Activated T-helper 1 cell treated with anti-CD3 and anti-CD28 coated beads, Interleukin-12 subunit alpha, Interleukin-12 subunit beta, Interleukin-2, Interleukin-4 antibody, amounts not matched to agents 30 ng/mL and 10 ng/mL and 1 ng/mL, durations not matched to agents 14 hours and 24 hours and 36 hours (primary cell): ENCODE measurements at regions of chr2 and their contacts with region 1.

Region 1: GRCh38 chr2:101308432-101309210 is at the start of gene RNF149:
- DNase-seq: peak; percentile 91
- H3K4me3 Mint-ChIP-seq: peak within 1 kb of the TSS; percentile 92
- H3K27ac Mint-ChIP-seq: peak within 1 kb of the TSS; percentile 96
- H3K4me1 Mint-ChIP-seq: peaks cover 65% of the 10 kb centered on the region
- H3K27me3 Mint-ChIP-seq: peaks cover 2% of the 10 kb centered on the region
- total RNA-seq, gene RNF149: 54.8 and 55.9 TPM in 2 replicates

Region 2: GRCh38 chr2:100562732-100563720 is 745.6 kb before region 1 on chr2 and contains the start of gene PDCL3:
- intact Hi-C with region 1: loop called (anchors 2 kb)
- DNase-seq: peak; percentile 93
- H3K4me3 Mint-ChIP-seq: peak within 1 kb of the TSS; percentile 97
- H3K27ac Mint-ChIP-seq: peak within 1 kb of the TSS; percentile 99
- H3K4me1 Mint-ChIP-seq: peaks cover 52% of the 10 kb centered on the region
- H3K27me3 Mint-ChIP-seq: no peaks in the 10 kb centered on the region
- total RNA-seq, gene PDCL3: 39.2 and 45.5 TPM in 2 replicates

Region 3: DNA sequence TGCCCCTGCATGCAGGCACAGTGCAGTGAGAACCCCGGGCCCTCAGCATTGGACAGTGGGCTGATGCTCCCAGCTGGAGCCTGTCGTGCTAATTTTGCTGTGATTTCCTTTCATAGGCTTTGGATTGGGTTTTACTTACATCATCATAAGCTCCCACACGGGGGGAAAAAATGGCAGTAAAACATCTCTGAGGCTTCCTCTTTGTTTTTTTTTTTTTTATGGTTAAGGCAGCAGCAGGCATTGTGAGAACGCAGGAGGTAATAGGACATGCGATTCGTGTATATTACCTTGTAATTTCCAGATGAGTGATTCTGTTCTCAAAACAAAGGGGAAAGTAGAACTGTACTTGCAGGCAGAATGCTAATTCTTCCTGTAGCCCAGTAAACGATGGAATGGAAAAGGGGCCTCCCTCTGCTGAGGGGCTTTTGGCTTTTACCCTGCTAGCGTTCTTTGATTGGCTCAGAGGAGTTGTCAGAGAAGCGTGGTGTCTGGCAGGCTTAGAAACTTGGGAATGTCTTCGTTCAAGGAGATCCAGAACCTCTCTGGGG is 399.0 kb before region 1 on chr2:
- intact Hi-C with region 1: no loop called
- DNase-seq: no peak
- H3K4me3 Mint-ChIP-seq: no peak overlapping the region
- H3K27ac Mint-ChIP-seq: no peak overlapping the region
- H3K4me1 Mint-ChIP-seq: no peaks in the 10 kb centered on the region
- H3K27me3 Mint-ChIP-seq: no peaks in the 10 kb centered on the region

Region 4: GRCh38 chr2:101151141-101151858 is 157.3 kb before region 1 on chr2 and contains the start of gene TBC1D8:
- intact Hi-C with region 1: loop called (anchors 5 kb)
- DNase-seq: peak; percentile 63
- H3K4me3 Mint-ChIP-seq: peak within 1 kb of the TSS; percentile 75
- H3K27ac Mint-ChIP-seq: no peak within 1 kb of the TSS
- H3K4me1 Mint-ChIP-seq: peaks cover 11% of the 10 kb centered on the region
- H3K27me3 Mint-ChIP-seq: peaks cover 60% of the 10 kb centered on the region
- total RNA-seq, gene TBC1D8: 0.91 and 1.1 TPM in 2 replicates

Region 5: DNA sequence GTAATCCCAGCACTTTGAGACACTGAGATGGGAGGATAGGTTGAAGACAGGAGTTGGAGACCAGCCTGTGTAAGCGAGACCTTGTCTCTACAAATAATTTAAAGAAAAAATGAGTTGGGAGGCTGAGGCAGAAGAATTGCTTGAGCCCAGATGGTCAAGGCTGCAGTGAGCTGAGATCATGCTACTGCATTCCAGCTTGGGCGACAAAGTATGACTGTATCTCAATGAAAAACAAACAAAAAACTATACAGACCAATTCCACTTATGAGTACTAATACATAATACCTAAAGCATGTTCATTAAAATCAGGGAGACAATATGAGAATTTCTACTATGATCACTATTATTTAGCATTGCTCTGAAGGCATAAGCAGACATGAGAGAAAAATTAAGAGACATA is 12.7 kb before region 1 on chr2:
- intact Hi-C with region 1: loop called (anchors 1 kb)
- DNase-seq: no peak
- H3K4me3 Mint-ChIP-seq: no peak overlapping the region
- H3K27ac Mint-ChIP-seq: no peak overlapping the region
- H3K4me1 Mint-ChIP-seq: peaks cover 33% of the 10 kb centered on the region
- H3K27me3 Mint-ChIP-seq: no peaks in the 10 kb centered on the region

Region 6: DNA sequence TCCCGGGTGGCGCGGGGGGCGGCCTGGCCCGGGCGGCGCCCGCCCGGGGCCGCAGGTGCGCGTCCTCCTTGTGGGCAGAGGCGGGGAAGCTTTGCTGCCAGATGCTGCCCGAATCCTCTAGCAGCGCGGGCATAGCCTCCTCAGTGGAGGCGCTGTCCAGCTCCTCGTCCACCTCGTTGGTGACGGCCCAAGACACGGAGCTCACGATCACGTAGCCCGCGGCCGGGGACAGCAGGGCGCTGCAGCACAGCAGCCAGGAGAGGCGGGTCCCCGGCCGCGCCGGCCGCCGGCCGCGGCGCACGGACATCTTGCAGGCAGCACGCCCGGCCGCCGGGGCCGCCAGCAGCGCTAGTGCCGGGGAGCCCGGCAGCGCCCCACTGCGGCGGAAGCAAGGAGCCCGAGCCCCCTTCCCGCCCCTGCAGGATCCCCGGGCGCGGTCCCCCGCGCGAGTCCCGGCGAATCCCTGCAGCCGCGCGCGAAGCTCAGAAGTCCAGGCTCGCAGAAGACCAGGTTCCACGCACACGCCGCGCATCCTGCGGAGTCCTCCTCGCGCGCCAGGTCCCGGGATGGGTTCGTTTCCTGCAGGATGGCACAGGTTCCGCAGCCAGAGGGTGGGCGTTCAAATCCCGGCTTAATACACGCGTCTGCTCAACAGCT is 78.7 kb after region 1 on chr2 and contains the start of gene CREG2:
- intact Hi-C with region 1: loop called (anchors 1 kb)
- DNase-seq: peak; percentile 56
- H3K4me3 Mint-ChIP-seq: peak within 1 kb of the TSS; percentile 65
- H3K27ac Mint-ChIP-seq: no peak within 1 kb of the TSS
- H3K4me1 Mint-ChIP-seq: peaks cover 11% of the 10 kb centered on the region
- H3K27me3 Mint-ChIP-seq: peaks cover 64% of the 10 kb centered on the region
- total RNA-seq, gene CREG2: not detected in 2 replicates

Region 7: GRCh38 chr2:101704046-101704466 is 395.4 kb after region 1 on chr2:
- intact Hi-C with region 1: loop called (anchors 5 kb)
- DNase-seq: no peak
- H3K4me3 Mint-ChIP-seq: peak overlapping the region; percentile 78
- H3K27ac Mint-ChIP-seq: peak overlapping the region; percentile 82
- H3K4me1 Mint-ChIP-seq: peaks cover 64% of the 10 kb centered on the region
- H3K27me3 Mint-ChIP-seq: no peaks in the 10 kb centered on the region

Region 8: DNA sequence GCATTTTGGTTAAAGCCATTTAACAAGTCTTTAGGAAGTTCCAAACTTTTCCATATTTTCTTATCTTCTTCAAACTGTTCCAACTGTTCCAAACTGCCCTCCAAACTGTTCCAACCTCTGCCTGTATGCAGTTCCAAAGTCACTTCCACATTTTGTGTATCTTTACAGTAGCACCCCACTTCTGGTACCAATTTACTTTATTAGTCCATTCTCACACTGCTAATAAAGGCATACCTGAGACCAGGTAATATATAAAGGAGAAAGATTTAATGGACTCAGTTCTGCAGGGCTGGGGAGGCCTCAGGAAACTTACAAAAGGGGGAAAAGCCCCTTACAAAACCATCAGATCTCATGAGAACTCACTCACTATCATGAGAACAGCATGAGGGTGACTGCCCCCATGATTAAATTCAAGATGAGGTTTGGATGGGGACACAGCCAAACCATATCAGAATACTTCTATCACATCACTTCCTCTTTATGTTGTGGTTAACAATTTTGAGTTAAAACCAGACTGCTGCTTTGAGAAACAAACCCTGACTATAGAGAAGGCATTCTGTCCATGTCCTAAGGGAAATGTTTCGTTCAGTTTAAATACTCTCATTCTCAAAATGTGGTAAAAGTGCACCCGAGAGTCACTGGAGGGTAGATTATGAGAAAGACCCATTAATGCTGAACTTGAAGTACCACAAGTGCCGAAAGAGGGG is 1057.9 kb after region 1 on chr2:
- intact Hi-C with region 1: loop called (anchors 5 kb)
- DNase-seq: no peak
- H3K4me3 Mint-ChIP-seq: peak overlapping the region; percentile 79
- H3K27ac Mint-ChIP-seq: peak overlapping the region; percentile 97
- H3K4me1 Mint-ChIP-seq: peaks cover 97% of the 10 kb centered on the region
- H3K27me3 Mint-ChIP-seq: no peaks in the 10 kb centered on the region